A549 (cell line): ENCODE measurements at regions of chr1 and their contacts with region 1.

Region 1: GRCh38 chr1:108199781-108200570 is at the start of gene SLC25A24:
- DNase-seq: peak; percentile 76 to 78
- ATAC-seq: peak; percentile 96 to 98
- H3K4me3 ChIP-seq: peak within 1 kb of the TSS; percentile 75
- H3K27ac ChIP-seq: peak within 1 kb of the TSS; percentile 94 to 98
- H3K4me1 ChIP-seq: peaks cover 16% of the 10 kb centered on the region; the same call in 1 of the 3 replicates
- CTCF ChIP-seq: no peak
- EP300 ChIP-seq: no peak
- POLR2A ChIP-seq: peak; percentile 74
- RAD21 ChIP-seq: no peak
- polyA plus RNA-seq, gene SLC25A24: 34.2 and 45.6 TPM in 2 replicates

Region 2: GRCh38 chr1:107897438-107898345 is 302.3 kb before region 1 on chr1:
- CTCF ChIA-PET with region 1: no interaction called
- POLR2A ChIA-PET with region 1: no interaction called
- DNase-seq: no peak
- ATAC-seq: no peak
- H3K4me3 ChIP-seq: no peak overlapping the region
- H3K27ac ChIP-seq: no peak overlapping the region
- H3K4me1 ChIP-seq: no peaks in the 10 kb centered on the region
- CTCF ChIP-seq: no peak
- EP300 ChIP-seq: no peak
- POLR2A ChIP-seq: no peak
- RAD21 ChIP-seq: no peak

Region 3: GRCh38 chr1:108661030-108661620 is 461.1 kb after region 1 on chr1 and contains the start of gene HENMT1:
- CTCF ChIA-PET with region 1: no interaction called
- POLR2A ChIA-PET with region 1: interaction called, 13 read pairs
- DNase-seq: peak; percentile 19 to 80
- ATAC-seq: peak; percentile 92 to 95
- H3K4me3 ChIP-seq: peak within 1 kb of the TSS; percentile 60
- H3K27ac ChIP-seq: peak within 1 kb of the TSS; percentile 92 to 98
- H3K4me1 ChIP-seq: 0 out of 3 replicates have a peak, but pooled peaks cover 3% of the 10 kb centered on the region
- CTCF ChIP-seq: no peak
- EP300 ChIP-seq: no peak
- POLR2A ChIP-seq: peak; percentile 38
- RAD21 ChIP-seq: no peak
- polyA plus RNA-seq, gene HENMT1: 8.7 and 9.7 TPM in 2 replicates